Activated CD4-positive, alpha-beta T cell treated with anti-CD3 and anti-CD28 coated beads, Interleukin-2, amount 10 ng/mL, durations not matched to agents 7 days and 5 days (primary cell): ENCODE measurements at regions of chr1 and their contacts with region 1.

Region 1: DNA sequence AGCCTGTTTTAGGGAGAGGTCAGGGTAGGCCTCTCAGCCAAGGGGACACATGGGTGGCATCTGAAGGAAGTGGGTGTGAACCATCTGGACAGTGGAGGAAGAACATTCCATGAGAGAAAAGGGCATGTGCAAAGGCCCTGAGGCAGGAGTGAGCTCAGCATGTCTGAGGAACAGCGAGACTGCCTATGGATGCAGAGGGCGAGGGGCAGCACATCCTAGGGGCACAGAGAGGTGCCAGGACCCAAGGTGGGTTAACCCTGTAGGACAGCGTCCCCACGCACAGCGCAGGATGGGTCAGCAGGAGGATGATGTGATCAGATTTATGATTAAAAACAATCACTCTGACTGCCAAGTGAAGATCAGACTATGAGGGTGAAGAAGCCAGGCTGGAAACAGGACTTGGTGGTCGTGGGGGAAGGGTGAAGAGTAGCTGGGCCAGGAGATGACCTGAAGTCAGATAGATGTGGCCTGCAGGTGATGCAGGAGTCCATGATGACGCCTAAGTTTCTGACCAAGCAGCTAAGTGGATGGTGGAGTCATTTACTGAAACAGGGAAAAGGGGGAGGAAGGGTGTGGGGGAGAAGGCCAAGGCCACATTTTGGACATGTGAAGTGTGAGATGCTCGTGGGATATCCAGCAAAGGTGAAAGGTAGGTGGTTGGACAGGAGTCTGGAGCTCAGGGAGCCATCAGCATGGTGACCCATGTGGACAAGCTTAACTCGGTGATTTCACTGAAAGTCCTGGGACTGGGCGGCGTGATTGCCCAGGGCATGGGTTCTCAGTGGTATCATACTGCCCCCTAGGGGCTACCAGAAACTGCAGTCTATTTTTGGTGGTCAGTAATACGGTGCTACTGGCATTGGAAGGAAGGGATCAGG is 37.8 kb downstream of the PABPC4 start:
- DNase-seq: peak; percentile 56
- H3K4me3 Mint-ChIP-seq: no peak overlapping the region
- H3K27ac Mint-ChIP-seq: no peak overlapping the region
- H3K4me1 Mint-ChIP-seq: no peaks in the 10 kb centered on the region
- H3K27me3 Mint-ChIP-seq: no peaks in the 10 kb centered on the region

Region 2: GRCh38 chr1:39525366-39526165 is 13.3 kb before region 1 on chr1:
- CTCF ChIA-PET with region 1: interaction called, 10 read pairs
- POLR2A ChIA-PET with region 1: no interaction called
- DNase-seq: peak; percentile 43
- H3K4me3 Mint-ChIP-seq: no peak overlapping the region
- H3K27ac Mint-ChIP-seq: peak overlapping the region; percentile 57
- H3K4me1 Mint-ChIP-seq: peaks cover 12% of the 10 kb centered on the region
- H3K27me3 Mint-ChIP-seq: no peaks in the 10 kb centered on the region